ENCODE measurements at regions of chr17 and their contacts with region 1.

Region 1: DNA sequence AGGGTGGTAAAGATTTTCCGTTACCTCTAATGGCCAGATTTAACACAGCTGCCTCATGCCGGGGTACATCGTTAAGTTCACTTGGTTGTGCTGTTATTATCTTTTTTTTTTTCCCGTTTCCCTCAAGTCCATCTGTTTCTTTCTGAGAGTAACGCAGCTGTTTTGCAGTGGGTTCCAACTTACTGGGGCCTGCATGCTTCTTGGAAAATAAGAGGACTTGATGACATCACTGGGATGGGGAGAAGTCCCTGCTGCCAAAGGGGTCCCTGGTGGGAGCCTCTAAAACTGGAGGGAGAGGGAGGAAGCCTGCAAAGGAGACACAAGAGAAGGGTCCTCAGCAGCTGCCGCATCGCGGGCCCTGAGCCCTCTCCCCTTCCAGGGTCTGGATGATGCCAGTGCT is 77.8 kb upstream of the NOL11 start:
- DNase-seq: no peak
- H3K4me3 ChIP-seq: no peak overlapping the region
- H3K27ac ChIP-seq: peak overlapping the region; percentile 78 to 83
- H3K4me1 ChIP-seq: peaks cover 22% of the 10 kb centered on the region
- H3K27me3 ChIP-seq: no peaks in the 10 kb centered on the region
- CTCF ChIP-seq: no peak
- POLR2A ChIP-seq: no peak

Region 2: GRCh38 chr17:67679225-67679624 is 39.2 kb after region 1 on chr17:
- intact Hi-C with region 1: loop called (anchors 5 kb)
- DNase-seq: no peak
- H3K4me3 ChIP-seq: no peak overlapping the region
- H3K27ac ChIP-seq: no peak overlapping the region
- H3K4me1 ChIP-seq: no peaks in the 10 kb centered on the region
- H3K27me3 ChIP-seq: no peaks in the 10 kb centered on the region
- CTCF ChIP-seq: no peak
- POLR2A ChIP-seq: no peak